ENCODE measurements at regions of chr5 and their contacts with region 1.

Region 1: DNA sequence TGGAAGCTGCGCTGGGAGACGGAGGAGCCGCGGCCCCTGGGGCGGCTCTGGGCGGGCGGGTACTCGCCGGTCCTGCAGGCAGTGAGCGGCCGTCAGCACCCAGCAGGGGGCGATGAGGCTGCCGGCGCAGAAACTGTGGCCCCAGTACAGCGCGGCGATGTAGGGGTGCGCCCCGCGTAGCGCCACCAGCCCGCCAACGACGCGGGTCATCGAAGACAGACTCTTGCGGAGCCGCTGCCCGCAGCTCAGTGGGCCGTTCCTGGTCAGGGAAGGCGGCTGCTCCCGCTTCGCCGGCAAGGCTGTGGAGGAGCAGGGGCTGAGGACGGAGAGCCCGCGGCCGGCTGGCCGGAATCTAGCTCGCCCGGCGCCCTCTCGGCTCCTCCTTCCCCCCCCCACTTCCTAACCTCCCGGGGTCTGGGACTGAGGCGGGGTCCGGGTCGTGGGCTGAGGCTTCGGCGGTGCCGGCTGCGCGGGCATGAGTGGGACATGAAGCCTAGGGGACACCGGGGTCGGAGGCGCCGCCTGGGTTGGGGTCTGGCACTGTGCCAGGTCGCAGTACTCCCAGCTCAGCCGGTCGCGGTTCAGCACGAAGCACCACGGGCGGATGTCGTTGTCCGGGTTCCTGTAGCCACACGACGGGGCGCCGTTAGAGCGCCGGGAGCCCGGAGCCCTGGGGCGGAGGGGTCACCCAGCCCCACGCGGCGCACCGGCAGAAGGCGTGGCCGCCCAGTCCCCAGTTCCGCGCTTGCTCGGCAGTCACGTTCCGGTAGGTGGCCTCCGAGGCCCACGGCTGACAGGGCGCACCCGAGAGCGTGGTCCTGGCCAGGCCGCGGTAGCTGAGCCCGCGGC is 3.6 kb upstream of the PFN3 start:
- DNase-seq: no peak
- ATAC-seq: peak; percentile 88
- H3K4me3 ChIP-seq: peak overlapping the region; percentile 60 to 86
- H3K27ac ChIP-seq: peak overlapping the region; percentile 72
- H3K4me1 ChIP-seq: peaks cover 10% of the 10 kb centered on the region
- H3K27me3 ChIP-seq: no peaks in the 10 kb centered on the region
- CTCF ChIP-seq: peak; percentile 82

Region 2: GRCh38 chr5:177100714-177101121 is 303.3 kb before region 1 on chr5:
- CTCF ChIA-PET with region 1: no interaction called
- POLR2A ChIA-PET with region 1: no interaction called
- in situ Hi-C with region 1: no loop called
- intact Hi-C with region 1: no loop called
- DNase-seq: no peak
- ATAC-seq: no peak; the same call in 1 of the 2 replicates
- H3K4me3 ChIP-seq: no peak overlapping the region
- H3K27ac ChIP-seq: no peak overlapping the region
- H3K4me1 ChIP-seq: no peaks in the 10 kb centered on the region
- H3K27me3 ChIP-seq: no peaks in the 10 kb centered on the region
- CTCF ChIP-seq: no peak

Region 3: DNA sequence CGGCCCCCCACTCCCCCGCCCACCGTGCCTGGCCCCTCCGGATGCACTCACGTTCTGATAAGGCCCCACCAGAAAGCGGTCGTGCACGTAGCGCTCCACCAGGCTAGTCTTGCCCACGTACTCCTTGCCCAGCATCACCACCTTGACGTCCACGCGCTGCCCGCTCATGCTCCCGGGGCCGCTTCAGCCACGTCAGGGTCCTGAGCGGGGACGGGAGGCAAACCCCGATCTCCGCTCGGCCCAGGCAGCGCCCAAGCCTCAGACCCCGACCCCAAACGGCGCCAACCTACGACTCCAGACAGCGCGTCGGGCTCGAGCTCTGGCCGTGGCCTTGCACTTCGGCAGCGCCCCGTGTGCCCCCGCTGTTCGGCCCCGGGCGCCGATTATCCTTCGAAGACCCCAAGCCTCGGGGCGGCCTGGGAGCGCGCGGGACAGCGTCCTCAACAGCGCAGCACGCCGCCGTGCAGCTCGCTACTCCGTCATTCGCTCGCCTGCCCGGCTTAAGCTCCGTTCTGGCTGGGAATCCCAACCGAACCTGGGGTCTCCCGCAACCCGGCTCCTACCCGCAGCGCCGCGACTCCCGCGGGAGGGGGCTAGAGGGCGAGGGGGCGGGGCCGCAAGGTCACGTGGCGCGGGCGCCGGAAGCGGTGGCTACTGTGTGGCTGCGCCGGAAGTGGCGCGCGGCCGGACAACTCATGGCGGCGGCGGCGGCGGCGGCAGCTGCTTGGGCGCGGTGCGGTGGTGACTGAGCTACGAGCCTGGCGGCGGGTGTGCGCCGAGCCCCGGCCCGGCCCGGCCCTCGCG is 100.7 kb before region 1 on chr5 and contains the starts of genes PRELID1 and RAB24:
- CTCF ChIA-PET with region 1: interaction called, 4 read pairs
- POLR2A ChIA-PET with region 1: interaction called, 11 read pairs
- in situ Hi-C with region 1: no loop called
- intact Hi-C with region 1: no loop called
- DNase-seq: no peak
- ATAC-seq: peak; percentile 77
- H3K4me3 ChIP-seq: peak within 1 kb of the TSS; percentile 81 to 97
- H3K27ac ChIP-seq: peak within 1 kb of the TSS; percentile 94
- H3K4me1 ChIP-seq: peaks cover 34% of the 10 kb centered on the region
- H3K27me3 ChIP-seq: no peaks in the 10 kb centered on the region
- CTCF ChIP-seq: peak; percentile 63
- total RNA-seq, gene PRELID1: 275 TPM
- total RNA-seq, gene RAB24: 37.2 TPM

Region 4: DNA sequence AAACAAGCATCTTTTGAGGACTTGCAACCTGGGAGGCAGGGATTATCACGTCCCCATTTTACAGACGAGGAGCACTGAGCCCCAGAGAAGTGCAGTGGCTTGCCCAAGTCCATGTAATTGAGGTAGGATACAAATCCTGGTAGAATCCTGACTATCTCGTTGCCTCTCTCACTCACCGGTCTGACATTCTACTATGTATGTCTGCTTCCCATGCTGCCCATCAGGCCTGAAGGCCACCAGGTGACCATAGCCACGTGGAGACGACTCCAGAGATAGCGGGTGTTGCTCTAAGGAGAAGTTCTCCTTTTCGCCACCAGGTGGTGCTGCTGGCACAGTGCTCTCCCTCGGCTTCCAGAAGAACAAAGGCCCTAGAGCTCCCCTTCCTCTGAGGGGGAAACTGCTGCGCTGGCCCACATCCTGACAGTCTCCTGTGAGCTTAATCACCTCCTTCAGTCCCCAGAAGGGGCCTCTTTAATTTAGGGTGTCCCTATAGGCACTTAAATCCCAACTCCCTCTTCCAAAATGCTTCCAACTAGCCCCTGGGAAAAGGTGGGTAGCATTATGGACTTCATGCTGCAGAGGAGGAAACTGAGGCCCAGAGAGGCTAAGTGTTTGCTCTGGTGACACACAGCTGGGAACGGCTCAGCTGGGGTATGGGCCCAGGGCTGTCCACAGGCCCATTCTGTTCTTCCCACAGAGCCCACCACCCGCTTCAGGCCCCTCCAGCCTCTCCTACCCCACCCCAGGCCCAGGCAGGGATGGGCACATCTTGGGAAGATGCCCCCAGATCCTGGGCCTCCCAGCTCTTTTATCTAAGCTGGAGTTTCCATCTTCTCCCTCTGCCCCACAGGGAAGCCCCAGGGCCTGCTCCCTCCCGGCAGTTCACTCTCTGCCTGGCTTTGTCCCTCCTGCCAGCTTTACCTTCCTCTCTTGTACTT is 13.4 kb before region 1 on chr5:
- CTCF ChIA-PET with region 1: interaction called, 34 read pairs
- POLR2A ChIA-PET with region 1: no interaction called
- in situ Hi-C with region 1: no loop called
- intact Hi-C with region 1: no loop called
- DNase-seq: no peak
- ATAC-seq: peak; percentile 92
- H3K4me3 ChIP-seq: no peak overlapping the region
- H3K27ac ChIP-seq: peak overlapping the region; percentile 60; the same call in 1 of the 2 replicates
- H3K4me1 ChIP-seq: peaks cover 3% of the 10 kb centered on the region; the same call in 1 of the 2 replicates
- H3K27me3 ChIP-seq: no peaks in the 10 kb centered on the region
- CTCF ChIP-seq: peak; percentile 97

Region 5: GRCh38 chr5:177425801-177426565 is 22.0 kb after region 1 on chr5:
- CTCF ChIA-PET with region 1: interaction called, 13 read pairs
- POLR2A ChIA-PET with region 1: interaction called, 11 read pairs
- in situ Hi-C with region 1: no loop called
- intact Hi-C with region 1: no loop called
- DNase-seq: peak; percentile 100
- ATAC-seq: peak; percentile 94
- H3K4me3 ChIP-seq: peak overlapping the region; percentile 60 to 62
- H3K27ac ChIP-seq: peak overlapping the region; percentile 97
- H3K4me1 ChIP-seq: peaks cover 18% of the 10 kb centered on the region
- H3K27me3 ChIP-seq: no peaks in the 10 kb centered on the region
- CTCF ChIP-seq: no peak

Region 6: GRCh38 chr5:177454397-177455035 is 50.5 kb after region 1 on chr5:
- CTCF ChIA-PET with region 1: interaction called, 29 read pairs
- POLR2A ChIA-PET with region 1: interaction called, 3 read pairs
- in situ Hi-C with region 1: no loop called
- intact Hi-C with region 1: loop called (anchors 2 kb)
- DNase-seq: peak; percentile 57
- ATAC-seq: peak; percentile 68
- H3K4me3 ChIP-seq: peak overlapping the region; percentile 50 to 61
- H3K27ac ChIP-seq: peak overlapping the region; percentile 78; the same call in 1 of the 2 replicates
- H3K4me1 ChIP-seq: peaks cover 41% of the 10 kb centered on the region
- H3K27me3 ChIP-seq: no peaks in the 10 kb centered on the region
- CTCF ChIP-seq: peak; percentile 95